ENCODE measurements at regions of chr19 and their contacts with region 1.

Region 1: DNA sequence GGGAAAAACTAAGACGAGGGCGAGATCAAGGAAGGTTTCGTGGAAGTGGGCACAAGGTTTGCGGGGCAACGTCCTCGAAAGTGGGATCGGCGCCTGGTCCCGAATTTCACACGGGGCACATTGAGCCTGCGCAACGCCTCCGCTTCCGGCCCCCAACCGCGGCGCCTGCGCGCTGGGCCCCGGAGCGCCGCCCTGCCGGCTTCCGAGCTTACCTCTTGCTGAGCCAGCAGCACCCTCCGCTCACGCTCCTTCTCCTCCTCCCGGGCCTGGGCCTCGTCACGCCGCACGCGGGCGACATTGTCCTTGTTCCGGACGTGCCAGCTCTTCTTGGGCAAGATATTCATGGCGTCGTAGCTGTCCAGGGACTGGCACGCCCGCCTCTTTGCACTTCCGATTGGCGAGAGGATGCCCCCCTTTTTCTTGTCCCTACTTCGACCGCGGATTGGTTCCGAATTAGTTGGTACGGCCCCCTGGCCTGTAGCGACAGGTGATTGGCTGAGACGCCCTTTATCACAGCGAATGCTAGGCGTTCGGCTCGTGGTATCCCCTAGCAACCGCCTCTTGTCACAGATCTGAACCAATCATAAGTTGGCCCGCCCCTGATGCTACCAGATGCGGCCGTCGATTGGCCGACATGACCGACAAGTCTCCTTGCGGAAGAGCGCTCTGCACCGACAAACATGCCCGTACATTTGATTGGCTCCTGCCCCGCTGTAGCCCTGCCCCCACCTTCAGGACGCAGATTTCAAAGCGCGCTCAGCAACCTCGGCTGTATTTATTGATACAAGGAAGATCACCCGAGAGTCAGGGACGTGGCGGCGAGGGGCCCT is at the start of gene LENG1:
- DNase-seq: peak; percentile 92

Region 2: GRCh38 chr19:54137086-54137921 is 22.3 kb before region 1 on chr19 and contains the start of gene CNOT3:
- CTCF ChIA-PET with region 1: no interaction called
- POLR2A ChIA-PET with region 1: interaction called, 13 read pairs
- DNase-seq: peak; percentile 96

Region 3: DNA sequence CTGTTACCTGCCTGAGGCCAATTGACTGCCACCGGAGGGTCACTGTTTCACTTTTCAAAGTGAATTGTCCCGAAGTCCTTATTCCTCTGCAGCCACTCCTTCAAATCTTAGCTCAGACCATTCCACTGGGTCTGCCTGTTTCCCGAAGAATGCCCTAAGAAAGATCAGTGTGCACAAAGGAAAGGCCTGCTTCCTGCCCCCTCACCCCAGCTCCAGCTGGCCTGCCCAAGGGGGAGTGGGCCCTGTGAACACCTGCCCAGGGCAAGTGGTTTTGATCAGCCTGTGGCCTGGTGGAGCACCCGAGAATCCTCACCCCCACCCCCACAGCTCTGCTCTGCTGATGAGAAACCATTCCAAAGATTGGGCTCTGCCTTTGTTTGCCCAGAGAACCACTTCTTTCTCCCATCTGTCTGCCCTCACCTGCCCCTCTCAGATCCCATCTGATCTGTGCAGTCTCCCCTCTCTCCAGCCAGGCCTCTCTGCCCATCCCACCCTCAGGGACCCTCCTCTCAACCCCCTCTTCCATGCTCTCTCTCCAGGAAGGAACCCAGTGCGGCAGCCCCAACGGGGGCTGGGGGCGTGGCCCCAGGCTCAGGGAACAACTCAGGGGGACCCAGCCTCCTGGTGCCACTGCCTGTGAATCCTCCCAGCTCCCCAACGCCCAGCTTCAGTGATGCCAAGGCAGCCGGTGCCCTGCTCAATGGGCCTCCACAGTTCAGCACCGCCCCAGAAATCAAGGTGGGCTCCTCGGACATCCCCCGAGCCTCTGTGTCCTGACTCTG is 10.4 kb before region 1 on chr19:
- CTCF ChIA-PET with region 1: no interaction called
- POLR2A ChIA-PET with region 1: interaction called, 10 read pairs
- DNase-seq: no peak

Region 4: DNA sequence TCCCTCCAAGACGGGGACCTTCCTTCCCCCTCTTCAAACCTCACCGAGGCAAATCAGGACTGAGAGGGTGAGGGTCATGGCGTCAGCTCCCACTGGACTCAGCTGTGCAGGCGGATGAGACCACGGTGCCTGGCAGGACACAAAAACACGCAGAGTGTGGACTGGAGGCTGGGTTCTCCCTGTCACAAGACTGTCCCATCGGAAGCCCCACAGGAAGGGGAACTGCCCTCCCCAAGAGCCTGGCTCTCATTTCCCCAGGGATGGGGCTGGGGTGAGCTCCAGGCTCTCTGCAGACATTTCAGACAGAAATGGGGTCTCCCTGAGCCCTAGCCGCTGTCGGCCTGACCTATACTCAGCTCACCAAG is 97.5 kb after region 1 on chr19 and contains the start of gene LILRB5:
- CTCF ChIA-PET with region 1: no interaction called
- POLR2A ChIA-PET with region 1: no interaction called
- DNase-seq: no peak

Measured in HEK293T (cell line).